Sciatic nerve (tissue), 2 donors: ENCODE measurements at regions of chr3 and their contacts with region 1.

Region 1: GRCh38 chr3:98022978-98023820 is 11.9 kb downstream of the GABRR3 start:
- DNase-seq: peak; percentile 98
- ATAC-seq: peak; percentile 89

Region 2: GRCh38 chr3:97804471-97804870 is 218.7 kb before region 1 on chr3:
- intact Hi-C with region 1: loop called (anchors 10 kb)
- DNase-seq: no peak
- ATAC-seq: no peak

Region 3: DNA sequence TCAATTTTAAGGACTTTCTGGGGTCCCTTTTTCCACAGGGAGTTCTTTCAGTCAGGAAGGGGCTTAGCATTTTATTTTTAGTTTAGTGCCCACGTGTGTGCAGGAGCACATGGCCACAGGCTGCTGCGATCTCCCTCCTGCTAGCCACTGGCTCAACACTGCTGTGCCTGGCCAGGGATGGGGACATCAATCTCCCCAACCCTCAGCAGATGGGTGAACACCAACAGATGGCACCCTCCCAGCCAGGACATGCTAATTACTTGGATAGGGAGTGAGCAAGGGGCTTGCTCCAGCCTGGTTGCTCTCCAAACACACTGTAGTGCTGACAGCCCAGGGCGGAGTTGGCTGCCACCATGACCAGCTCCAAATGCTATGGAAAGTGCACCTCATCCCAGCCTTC is 43.6 kb before region 1 on chr3:
- intact Hi-C with region 1: loop called (anchors 1 kb)
- DNase-seq: no peak
- ATAC-seq: no peak